CD8-positive, alpha-beta T cell (primary cell): ENCODE measurements at regions of chr6 and their contacts with region 1.

Region 1: DNA sequence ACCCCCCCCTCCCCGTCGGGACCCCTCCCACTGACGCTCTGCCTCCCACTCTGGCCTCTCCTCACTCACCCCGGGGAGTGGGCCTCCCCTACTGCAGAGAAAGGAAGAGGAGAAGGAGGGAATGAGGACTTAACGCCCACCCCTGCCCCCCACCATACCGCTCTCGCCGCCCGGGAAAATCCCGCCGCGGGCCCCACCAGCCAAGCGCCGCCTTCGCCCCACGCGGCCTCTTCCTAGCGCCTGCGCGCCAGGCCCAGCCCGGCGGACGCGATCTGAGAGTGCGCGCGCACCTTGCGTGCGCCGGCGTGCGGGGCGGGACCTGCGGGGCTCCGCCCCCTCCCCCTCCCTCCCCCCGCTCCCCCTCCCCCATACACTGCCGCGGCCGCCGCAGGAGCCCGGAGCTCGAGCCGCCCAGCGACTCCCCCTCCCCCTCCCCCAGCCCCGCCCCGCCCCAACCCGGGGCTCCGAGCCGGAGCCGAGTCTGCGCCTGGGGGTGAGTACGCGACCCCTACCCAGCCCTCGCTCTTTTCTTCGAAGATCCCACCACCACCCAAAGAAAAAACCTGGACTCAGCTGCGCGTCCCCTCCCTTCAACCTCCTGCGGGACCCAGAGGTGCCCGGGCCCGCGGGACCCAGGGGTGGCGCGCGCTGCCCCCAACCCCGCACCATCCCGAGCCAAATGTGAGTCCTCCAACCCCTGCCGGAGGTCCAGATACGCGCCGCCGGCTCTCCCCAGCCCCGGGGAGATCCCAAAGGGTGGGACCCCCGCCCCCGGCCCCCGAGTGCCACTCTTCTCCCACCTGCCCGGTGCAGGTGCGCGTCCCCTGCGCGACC is at the starts of genes MRPL14 and TMEM63B:
- DNase-seq: peak; percentile 81 to 96 (median 88)
- ATAC-seq: peak; percentile 88
- H3K4me3 ChIP-seq: peak within 1 kb of the TSS; percentile 85 to 91
- H3K4me3 Mint-ChIP-seq: peak within 1 kb of the TSS; percentile 94
- H3K27ac ChIP-seq: peak within 1 kb of the TSS; percentile 65 to 82
- H3K27ac Mint-ChIP-seq: peak within 1 kb of the TSS; percentile 96
- H3K4me1 ChIP-seq: peaks cover 50% of the 10 kb centered on the region
- H3K4me1 Mint-ChIP-seq: peaks cover 55% of the 10 kb centered on the region
- H3K27me3 ChIP-seq: no peaks in the 10 kb centered on the region
- H3K27me3 Mint-ChIP-seq: no peaks in the 10 kb centered on the region
- CTCF ChIP-seq: no peak
- total RNA-seq, gene MRPL14: 10.3 to 10.5 TPM
- total RNA-seq, gene TMEM63B: 14.1 to 19.0 TPM

Region 2: GRCh38 chr6:43635387-43636307 is 491.8 kb before region 1 on chr6 and contains the start of gene MAD2L1BP:
- CTCF ChIA-PET with region 1: no interaction called
- POLR2A ChIA-PET with region 1: no interaction called
- intact Hi-C with region 1: loop called in 1 of 2 experiments (anchors 5 kb)
- DNase-seq: peak; percentile 66 to 90 (median 86)
- ATAC-seq: peak; percentile 88
- H3K4me3 ChIP-seq: peak within 1 kb of the TSS; percentile 79 to 96
- H3K4me3 Mint-ChIP-seq: peak within 1 kb of the TSS; percentile 98
- H3K27ac ChIP-seq: peak within 1 kb of the TSS; percentile 76 to 84
- H3K27ac Mint-ChIP-seq: peak within 1 kb of the TSS; percentile 94
- H3K4me1 ChIP-seq: peaks cover 32% of the 10 kb centered on the region
- H3K4me1 Mint-ChIP-seq: peaks cover 53% of the 10 kb centered on the region
- H3K27me3 ChIP-seq: no peaks in the 10 kb centered on the region
- H3K27me3 Mint-ChIP-seq: no peaks in the 10 kb centered on the region
- CTCF ChIP-seq: no peak
- total RNA-seq, gene MAD2L1BP: 29.2 TPM

Region 3: DNA sequence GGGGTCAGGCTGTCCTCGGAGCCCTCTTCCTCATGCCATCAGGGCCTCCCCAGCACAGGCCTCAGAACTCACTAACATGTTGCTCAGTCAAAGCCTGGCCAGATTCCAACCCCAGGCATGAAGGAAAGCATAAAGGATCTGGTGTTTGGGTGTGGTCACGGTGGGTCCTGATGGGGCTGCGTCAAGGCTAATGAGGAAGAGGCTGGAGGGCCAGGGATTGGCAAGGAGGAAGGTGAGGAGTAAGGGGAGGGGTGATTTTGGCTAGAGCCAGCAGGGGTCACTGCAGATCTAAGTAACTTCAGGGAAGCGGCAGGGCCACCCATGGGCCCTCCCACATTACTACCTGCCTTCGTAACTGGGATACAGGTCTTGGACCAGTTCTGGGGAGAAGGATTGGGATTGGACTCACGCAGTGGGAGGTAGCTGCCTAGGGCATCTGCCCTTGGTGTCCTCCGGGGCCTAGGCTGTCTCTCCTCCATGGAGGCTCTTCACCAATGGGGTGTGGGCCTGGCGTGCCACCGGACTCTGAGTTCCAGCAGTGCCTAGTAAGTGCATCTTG is 403.6 kb before region 1 on chr6:
- CTCF ChIA-PET with region 1: no interaction called
- POLR2A ChIA-PET with region 1: no interaction called
- intact Hi-C with region 1: no loop called
- DNase-seq: peak; percentile 40 to 83 (median 69)
- ATAC-seq: peak; percentile 65
- H3K4me3 ChIP-seq: no peak overlapping the region
- H3K4me3 Mint-ChIP-seq: no peak overlapping the region
- H3K27ac ChIP-seq: no peak overlapping the region
- H3K27ac Mint-ChIP-seq: no peak overlapping the region
- H3K4me1 ChIP-seq: peaks cover 25% of the 10 kb centered on the region
- H3K4me1 Mint-ChIP-seq: peaks cover 35% of the 10 kb centered on the region
- H3K27me3 ChIP-seq: no peaks in the 10 kb centered on the region
- H3K27me3 Mint-ChIP-seq: no peaks in the 10 kb centered on the region
- CTCF ChIP-seq: peak; percentile 70

Region 4: GRCh38 chr6:44151348-44152108 is 24.1 kb after region 1 on chr6:
- CTCF ChIA-PET with region 1: interaction called, 5 read pairs
- POLR2A ChIA-PET with region 1: no interaction called
- intact Hi-C with region 1: loop called in 1 of 2 experiments (anchors 1 kb)
- DNase-seq: peak; percentile 63 to 88 (median 80)
- ATAC-seq: peak; percentile 93
- H3K4me3 ChIP-seq: peak overlapping the region in 1 of 2 experiments; percentile 20
- H3K4me3 Mint-ChIP-seq: no peak overlapping the region
- H3K27ac ChIP-seq: no peak overlapping the region
- H3K27ac Mint-ChIP-seq: no peak overlapping the region
- H3K4me1 ChIP-seq: peaks cover 8% of the 10 kb centered on the region
- H3K4me1 Mint-ChIP-seq: peaks cover 2% of the 10 kb centered on the region
- H3K27me3 ChIP-seq: no peaks in the 10 kb centered on the region
- H3K27me3 Mint-ChIP-seq: no peaks in the 10 kb centered on the region
- CTCF ChIP-seq: peak; percentile 99

Region 5: GRCh38 chr6:44246663-44247337 is 119.4 kb after region 1 on chr6 and contains the start of gene HSP90AB1:
- CTCF ChIA-PET with region 1: no interaction called
- POLR2A ChIA-PET with region 1: interaction called, 3 read pairs
- intact Hi-C with region 1: loop called (anchors 5 kb)
- DNase-seq: peak; percentile 89 to 99 (median 94)
- ATAC-seq: peak; percentile 79
- H3K4me3 ChIP-seq: peak within 1 kb of the TSS; percentile 96 to 98
- H3K4me3 Mint-ChIP-seq: peak within 1 kb of the TSS; percentile 99
- H3K27ac ChIP-seq: peak within 1 kb of the TSS; percentile 95 to 96
- H3K27ac Mint-ChIP-seq: peak within 1 kb of the TSS; percentile 98
- H3K4me1 ChIP-seq: peaks cover 26% of the 10 kb centered on the region
- H3K4me1 Mint-ChIP-seq: peaks cover 50% of the 10 kb centered on the region
- H3K27me3 ChIP-seq: no peaks in the 10 kb centered on the region
- H3K27me3 Mint-ChIP-seq: no peaks in the 10 kb centered on the region
- CTCF ChIP-seq: no peak
- total RNA-seq, gene HSP90AB1: 561 to 585 TPM

Region 6: GRCh38 chr6:44312901-44313788 is 185.7 kb after region 1 on chr6 and contains the start of gene AARS2:
- CTCF ChIA-PET with region 1: no interaction called
- POLR2A ChIA-PET with region 1: no interaction called
- intact Hi-C with region 1: loop called in 1 of 2 experiments (anchors 1 kb)
- DNase-seq: peak; percentile 87 to 98 (median 91)
- ATAC-seq: peak; percentile 93
- H3K4me3 ChIP-seq: peak within 1 kb of the TSS; percentile 82 to 92
- H3K4me3 Mint-ChIP-seq: peak within 1 kb of the TSS; percentile 98
- H3K27ac ChIP-seq: peak within 1 kb of the TSS; percentile 66 to 78
- H3K27ac Mint-ChIP-seq: peak within 1 kb of the TSS; percentile 95
- H3K4me1 ChIP-seq: peaks cover 11% of the 10 kb centered on the region
- H3K4me1 Mint-ChIP-seq: peaks cover 13% of the 10 kb centered on the region
- H3K27me3 ChIP-seq: no peaks in the 10 kb centered on the region
- H3K27me3 Mint-ChIP-seq: peaks cover 6% of the 10 kb centered on the region
- CTCF ChIP-seq: peak; percentile 91
- total RNA-seq, gene AARS2: 13.5 to 14.7 TPM

Region 7: GRCh38 chr6:44327096-44327495 is 199.7 kb after region 1 on chr6:
- CTCF ChIA-PET with region 1: no interaction called
- POLR2A ChIA-PET with region 1: no interaction called
- intact Hi-C with region 1: no loop called
- DNase-seq: no peak
- ATAC-seq: no peak
- H3K4me3 ChIP-seq: no peak overlapping the region
- H3K4me3 Mint-ChIP-seq: no peak overlapping the region
- H3K27ac ChIP-seq: no peak overlapping the region
- H3K27ac Mint-ChIP-seq: no peak overlapping the region
- H3K4me1 ChIP-seq: no peaks in the 10 kb centered on the region
- H3K4me1 Mint-ChIP-seq: no peaks in the 10 kb centered on the region
- H3K27me3 ChIP-seq: peaks cover 0 to 4% of the 10 kb centered on the region in 2 experiments
- H3K27me3 Mint-ChIP-seq: peaks cover 24% of the 10 kb centered on the region
- CTCF ChIP-seq: no peak

Region 8: GRCh38 chr6:46011241-46012085 is 1884.1 kb after region 1 on chr6:
- CTCF ChIA-PET with region 1: no interaction called
- POLR2A ChIA-PET with region 1: no interaction called
- intact Hi-C with region 1: loop called in 1 of 2 experiments (anchors 5 kb)
- DNase-seq: peak; percentile 27 to 90 (median 67)
- ATAC-seq: peak; percentile 84
- H3K4me3 ChIP-seq: peak overlapping the region; percentile 23 to 33
- H3K4me3 Mint-ChIP-seq: peak overlapping the region; percentile 69
- H3K27ac ChIP-seq: peak overlapping the region; percentile 29 to 67
- H3K27ac Mint-ChIP-seq: peak overlapping the region; percentile 95
- H3K4me1 ChIP-seq: peaks cover 49% of the 10 kb centered on the region
- H3K4me1 Mint-ChIP-seq: peaks cover 54% of the 10 kb centered on the region
- H3K27me3 ChIP-seq: no peaks in the 10 kb centered on the region
- H3K27me3 Mint-ChIP-seq: peaks cover under 1% of the 10 kb centered on the region
- CTCF ChIP-seq: no peak